ENCODE measurements at regions of chr5 and their contacts with region 1.

Region 1: GRCh38 chr5:138065102-138065501 is 18.7 kb upstream of the WNT8A start:
- DNase-seq: no peak
- H3K4me3 ChIP-seq: no peak overlapping the region
- H3K27ac ChIP-seq: no peak overlapping the region
- H3K4me1 ChIP-seq: no peaks in the 10 kb centered on the region
- H3K27me3 ChIP-seq: no peaks in the 10 kb centered on the region
- CTCF ChIP-seq: no peak; the same call in 1 of the 2 replicates

Region 2: DNA sequence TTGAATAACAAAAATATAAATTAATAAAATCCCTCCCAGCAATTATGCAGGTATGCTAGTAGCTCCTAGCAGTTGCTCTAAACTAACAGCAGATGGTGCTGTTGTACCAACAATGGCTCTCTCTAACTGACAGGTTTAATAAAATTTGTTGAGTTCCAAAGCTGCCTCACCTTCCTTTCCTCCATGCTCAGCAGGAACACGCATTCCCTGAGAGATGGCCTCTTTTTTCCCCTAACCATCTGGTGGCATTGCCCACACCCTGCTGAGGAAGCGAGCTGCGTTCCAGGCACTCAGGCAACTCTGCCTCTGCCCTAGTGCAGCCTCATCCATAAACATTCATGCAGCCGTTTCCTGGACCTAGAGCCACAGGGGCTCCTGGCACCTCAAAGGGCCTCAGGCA is 435.5 kb before region 1 on chr5:
- CTCF ChIA-PET with region 1: interaction called, 4 read pairs
- POLR2A ChIA-PET with region 1: no interaction called
- intact Hi-C with region 1: loop called (anchors 2 kb)
- DNase-seq: peak in 1 of 2 experiments; percentile 11
- H3K4me3 ChIP-seq: no peak overlapping the region
- H3K27ac ChIP-seq: no peak overlapping the region
- H3K4me1 ChIP-seq: peaks cover 4% of the 10 kb centered on the region; the same call in 1 of the 2 replicates
- H3K27me3 ChIP-seq: no peaks in the 10 kb centered on the region
- CTCF ChIP-seq: peak; percentile 94

Region 3: DNA sequence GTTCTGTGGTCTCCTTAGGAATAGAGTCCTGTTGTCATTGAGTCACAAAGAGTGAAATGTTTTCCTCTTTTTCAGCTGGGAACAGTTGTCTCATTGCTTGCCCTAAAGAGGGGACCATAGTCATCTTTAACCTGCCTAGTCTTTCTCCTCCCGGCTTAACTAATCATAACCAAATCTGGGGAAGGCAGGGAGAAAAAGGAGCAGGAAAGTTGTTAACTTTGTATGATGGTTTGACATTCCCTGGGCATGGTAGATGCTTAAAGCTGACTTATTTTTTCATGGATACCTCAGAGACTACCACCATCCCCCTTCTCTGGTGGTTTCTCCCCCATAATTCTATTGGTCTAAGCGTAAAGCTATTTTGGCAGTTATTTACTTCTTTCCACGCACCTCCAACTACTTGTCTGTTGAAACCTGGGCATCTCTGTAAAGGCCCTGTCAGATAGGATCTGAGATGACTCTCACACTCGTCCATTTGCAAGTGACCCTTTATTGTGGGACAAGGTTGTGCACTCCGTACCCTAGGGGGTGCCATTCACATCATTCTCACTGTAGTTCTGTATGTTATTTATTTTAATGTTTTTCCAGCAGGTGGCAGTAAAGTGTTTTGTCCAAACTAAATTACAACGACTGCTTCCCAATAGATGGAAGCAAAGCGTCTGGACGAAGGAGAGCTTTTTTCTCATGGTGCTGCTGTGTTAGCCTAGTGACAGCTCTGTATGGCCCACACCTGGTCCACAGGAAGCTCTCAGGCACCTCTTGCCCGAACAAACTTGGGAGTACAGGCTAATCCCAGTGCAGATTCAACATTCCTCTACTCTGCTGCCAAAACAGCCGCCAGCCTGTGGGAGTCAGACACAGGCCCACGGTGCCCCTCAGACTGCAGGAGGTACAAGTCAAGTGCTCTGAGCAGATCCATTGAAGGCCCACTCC is 29.2 kb before region 1 on chr5:
- CTCF ChIA-PET with region 1: interaction called, 9 read pairs
- POLR2A ChIA-PET with region 1: no interaction called
- intact Hi-C with region 1: loop called (anchors 1 kb)
- DNase-seq: peak; percentile 55 to 79
- H3K4me3 ChIP-seq: no peak overlapping the region
- H3K27ac ChIP-seq: no peak overlapping the region
- H3K4me1 ChIP-seq: peaks cover 20% of the 10 kb centered on the region
- H3K27me3 ChIP-seq: no peaks in the 10 kb centered on the region
- CTCF ChIP-seq: peak; percentile 87

Region 4: DNA sequence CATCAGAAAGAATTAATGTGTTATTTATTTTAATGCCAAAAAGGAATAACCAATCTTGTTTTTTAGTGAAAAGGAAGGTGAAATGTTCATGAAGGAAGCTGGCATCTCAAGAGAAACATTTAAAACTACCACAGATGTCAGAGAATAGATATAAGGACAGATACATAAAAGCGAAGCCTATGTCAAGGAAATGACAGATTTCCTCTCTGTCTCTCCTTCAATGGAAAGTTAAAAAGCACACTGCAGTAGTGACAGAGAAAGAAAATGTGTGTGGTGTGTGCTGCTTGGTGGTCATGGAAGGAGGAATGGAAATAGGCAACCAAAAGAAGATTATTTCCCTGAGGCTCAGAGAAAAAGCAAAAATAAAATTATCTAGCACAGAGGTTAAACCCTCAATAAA is 27.9 kb after region 1 on chr5:
- CTCF ChIA-PET with region 1: interaction called, 10 read pairs
- POLR2A ChIA-PET with region 1: no interaction called
- intact Hi-C with region 1: no loop called
- DNase-seq: no peak
- H3K4me3 ChIP-seq: no peak overlapping the region
- H3K27ac ChIP-seq: no peak overlapping the region
- H3K4me1 ChIP-seq: no peaks in the 10 kb centered on the region
- H3K27me3 ChIP-seq: no peaks in the 10 kb centered on the region
- CTCF ChIP-seq: no peak